Activated B cell treated with CpG ODN at 0.5 μM for 24 hours (primary cell): ENCODE measurements at regions of chr19 and their contacts with region 1.

Region 1: GRCh38 chr19:17226002-17226933 is at the start of gene OCEL1:
- DNase-seq: peak; percentile 95
- ATAC-seq: peak; percentile 90
- H3K4me3 Mint-ChIP-seq: peak within 1 kb of the TSS; percentile 95
- H3K27ac Mint-ChIP-seq: peak within 1 kb of the TSS; percentile 97
- H3K4me1 Mint-ChIP-seq: peaks cover 6% of the 10 kb centered on the region
- H3K27me3 Mint-ChIP-seq: no peaks in the 10 kb centered on the region
- CTCF ChIP-seq: no peak
- total RNA-seq, gene OCEL1: 22.4 and 25.8 TPM in 2 replicates

Region 2: DNA sequence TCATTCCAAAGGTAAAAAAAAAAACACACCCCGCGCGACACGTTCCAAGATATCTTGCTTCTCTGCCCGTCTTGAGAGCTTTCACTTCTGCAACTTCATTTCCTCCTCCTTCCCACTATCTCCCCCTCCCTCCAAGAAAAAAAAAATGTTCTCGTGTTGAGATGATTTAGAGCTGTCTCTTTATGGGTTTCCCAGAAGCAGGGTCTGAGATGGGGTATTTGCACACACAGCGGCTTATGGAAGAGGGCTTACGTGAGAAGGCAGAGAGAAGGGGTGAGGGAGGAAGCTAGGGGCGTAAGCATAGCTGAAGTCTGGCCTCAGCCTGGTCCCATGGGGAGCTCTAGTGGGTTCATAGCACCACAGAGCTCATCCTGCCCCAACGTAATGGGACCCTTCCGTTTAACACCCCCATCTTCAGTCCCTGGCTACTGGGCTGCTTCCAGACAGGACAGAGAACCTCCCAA is 42.4 kb before region 1 on chr19:
- CTCF ChIA-PET with region 1: no interaction called
- POLR2A ChIA-PET with region 1: interaction called, 14 read pairs
- intact Hi-C with region 1: loop called (anchors 1 kb)
- DNase-seq: peak; percentile 42
- ATAC-seq: peak; percentile 85
- H3K4me3 Mint-ChIP-seq: peak overlapping the region; percentile 79
- H3K27ac Mint-ChIP-seq: peak overlapping the region; percentile 99
- H3K4me1 Mint-ChIP-seq: peaks cover 32% of the 10 kb centered on the region
- H3K27me3 Mint-ChIP-seq: no peaks in the 10 kb centered on the region
- CTCF ChIP-seq: no peak

Region 3: DNA sequence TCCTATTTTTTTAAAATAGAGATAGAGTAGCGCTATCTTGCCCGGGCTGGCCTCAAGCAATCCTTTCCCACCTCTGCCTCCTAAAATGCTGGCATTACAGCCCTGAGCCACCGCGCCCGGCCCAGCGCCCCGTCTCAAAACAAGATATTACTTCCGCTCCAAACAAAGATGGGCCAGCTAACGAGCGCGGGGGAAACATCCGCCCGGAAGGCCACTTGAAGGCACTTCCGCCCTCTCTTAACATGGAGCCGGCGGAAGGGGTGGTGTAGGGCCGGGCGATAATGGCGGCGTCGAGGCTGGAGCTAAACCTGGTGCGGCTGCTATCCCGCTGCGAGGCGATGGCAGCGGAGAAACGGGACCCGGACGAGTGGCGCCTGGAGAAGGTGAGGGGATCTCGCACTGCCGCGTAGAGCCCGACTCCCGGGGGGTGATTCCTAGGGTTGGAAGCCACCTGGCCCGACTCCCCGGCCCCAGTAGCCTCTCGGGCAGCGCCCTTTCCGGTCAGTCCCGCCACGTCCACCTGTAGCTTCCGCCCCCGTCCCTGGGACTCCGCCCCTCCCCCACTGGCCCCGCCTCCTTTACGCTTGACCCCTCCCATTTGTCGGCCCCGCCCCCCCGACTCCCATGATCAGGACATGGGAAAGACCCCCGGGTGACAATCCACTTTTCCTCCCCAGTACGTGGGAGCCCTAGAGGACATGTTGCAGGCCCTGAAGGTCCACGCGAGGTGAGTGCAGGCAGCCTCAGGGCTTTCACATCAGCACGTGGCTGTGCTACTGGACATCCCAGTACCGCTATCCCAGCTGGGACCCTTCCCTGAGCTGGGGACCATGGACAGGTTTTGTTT is 10.9 kb before region 1 on chr19 and contains the start of gene USE1:
- CTCF ChIA-PET with region 1: no interaction called
- POLR2A ChIA-PET with region 1: interaction called, 63 read pairs
- intact Hi-C with region 1: loop called (anchors 1 kb)
- DNase-seq: peak; percentile 73
- ATAC-seq: peak; percentile 92
- H3K4me3 Mint-ChIP-seq: peak within 1 kb of the TSS; percentile 91
- H3K27ac Mint-ChIP-seq: peak within 1 kb of the TSS; percentile 96
- H3K4me1 Mint-ChIP-seq: peaks cover 19% of the 10 kb centered on the region
- H3K27me3 Mint-ChIP-seq: no peaks in the 10 kb centered on the region
- CTCF ChIP-seq: no peak
- total RNA-seq, gene USE1: 41.9 and 43.4 TPM in 2 replicates

Region 4: GRCh38 chr19:17260842-17261325 is 34.6 kb after region 1 on chr19:
- CTCF ChIA-PET with region 1: interaction called, 4 read pairs
- POLR2A ChIA-PET with region 1: interaction called, 11 read pairs
- intact Hi-C with region 1: no loop called
- DNase-seq: peak; percentile 83
- ATAC-seq: peak; percentile 100
- H3K4me3 Mint-ChIP-seq: no peak overlapping the region
- H3K27ac Mint-ChIP-seq: no peak overlapping the region
- H3K4me1 Mint-ChIP-seq: peaks cover 11% of the 10 kb centered on the region
- H3K27me3 Mint-ChIP-seq: no peaks in the 10 kb centered on the region
- CTCF ChIP-seq: peak; percentile 74